ENCODE measurements at regions of chr11 and their contacts with region 1.

Region 1: GRCh38 chr11:64846998-64847666 is 2.7 kb upstream of the CDC42BPG start:
- DNase-seq: peak; percentile 94
- H3K4me3 Mint-ChIP-seq: no peak overlapping the region
- H3K27ac Mint-ChIP-seq: peak overlapping the region; percentile 64
- H3K4me1 Mint-ChIP-seq: peaks cover 58% of the 10 kb centered on the region
- H3K27me3 Mint-ChIP-seq: no peaks in the 10 kb centered on the region

Region 2: DNA sequence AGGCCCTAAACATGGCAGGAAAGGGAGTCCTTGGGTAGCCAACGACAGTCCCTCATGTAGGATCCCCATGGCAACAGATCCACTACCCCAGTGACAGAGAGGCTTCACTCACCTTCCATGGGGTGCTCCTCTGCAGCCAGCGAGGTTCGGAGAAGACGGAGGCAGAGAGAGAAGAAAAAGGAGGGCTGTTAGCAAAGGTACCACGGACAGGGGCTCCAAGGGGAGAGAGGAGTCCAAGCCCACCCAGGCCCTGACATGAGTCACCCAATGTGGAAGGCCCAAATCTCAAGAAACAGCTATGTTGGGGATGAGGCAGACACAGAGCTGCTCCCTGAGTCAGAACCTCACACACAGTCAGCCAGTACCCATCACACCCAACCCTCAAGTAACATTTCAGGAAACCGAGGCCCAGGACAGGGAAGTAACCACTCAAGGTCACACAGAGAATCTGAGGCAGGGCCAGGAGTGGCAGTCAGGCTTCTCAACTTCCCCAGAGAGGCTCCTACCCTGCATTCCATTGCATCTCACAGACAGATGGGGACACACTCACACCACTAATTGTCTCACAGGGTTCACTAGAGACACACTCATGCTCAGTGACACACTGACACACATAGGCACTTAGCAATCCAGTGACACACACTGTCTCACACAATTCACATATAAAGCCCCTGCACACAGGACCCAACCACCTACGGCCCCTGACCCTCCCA is 149.3 kb before region 1 on chr11:
- CTCF ChIA-PET with region 1: no interaction called
- POLR2A ChIA-PET with region 1: no interaction called
- DNase-seq: no peak
- H3K4me3 Mint-ChIP-seq: no peak overlapping the region
- H3K27ac Mint-ChIP-seq: no peak overlapping the region
- H3K4me1 Mint-ChIP-seq: peaks cover 6% of the 10 kb centered on the region
- H3K27me3 Mint-ChIP-seq: peaks cover 35% of the 10 kb centered on the region

Region 3: DNA sequence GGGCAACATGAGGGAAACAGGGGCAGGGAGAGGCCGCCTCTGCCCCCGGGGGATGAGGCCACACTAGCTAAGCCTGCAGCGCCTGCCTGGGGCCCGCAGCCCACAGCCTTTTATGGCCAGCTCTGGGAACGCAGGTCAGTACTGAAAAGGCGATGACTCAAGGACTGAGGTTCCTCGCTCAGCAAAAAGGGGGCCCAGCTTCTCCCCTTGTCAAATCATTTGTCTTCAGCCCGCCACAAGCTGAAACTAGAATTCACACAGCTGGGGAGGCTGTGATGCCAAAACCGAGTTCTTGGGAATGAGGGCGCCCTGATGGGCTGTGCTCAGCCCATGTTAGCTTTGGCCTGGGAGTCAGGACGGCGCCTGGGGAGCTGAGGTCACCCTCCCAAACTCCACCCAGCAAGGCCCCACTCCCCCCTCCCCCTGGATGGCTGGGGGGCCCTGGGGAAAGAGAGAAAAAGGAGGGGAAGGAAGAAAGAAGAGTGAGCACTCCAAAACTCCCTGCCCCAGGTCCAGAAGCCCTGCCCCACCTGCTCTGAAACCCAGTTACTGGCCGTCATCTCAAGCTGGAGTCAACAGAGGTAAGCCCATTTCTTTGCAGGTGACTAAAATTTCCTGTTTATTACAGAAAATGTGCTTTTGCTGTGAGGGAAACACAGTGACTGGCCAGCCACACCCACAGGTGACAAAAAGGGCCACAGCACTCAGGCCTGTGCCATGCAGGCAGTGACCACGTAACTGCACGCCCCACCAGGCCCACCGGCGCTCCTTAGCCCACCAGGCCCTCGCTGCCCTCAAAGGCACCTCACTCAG is 17.5 kb after region 1 on chr11:
- CTCF ChIA-PET with region 1: interaction called, 232 read pairs
- POLR2A ChIA-PET with region 1: no interaction called
- DNase-seq: no peak
- H3K4me3 Mint-ChIP-seq: peak overlapping the region; percentile 48
- H3K27ac Mint-ChIP-seq: peak overlapping the region; percentile 98
- H3K4me1 Mint-ChIP-seq: peaks cover 92% of the 10 kb centered on the region
- H3K27me3 Mint-ChIP-seq: no peaks in the 10 kb centered on the region

Region 4: GRCh38 chr11:64878494-64879243 is 31.5 kb after region 1 on chr11 and contains the start of gene EHD1:
- CTCF ChIA-PET with region 1: interaction called, 732 read pairs
- POLR2A ChIA-PET with region 1: no interaction called
- DNase-seq: peak; percentile 100
- H3K4me3 Mint-ChIP-seq: peak within 1 kb of the TSS; percentile 93
- H3K27ac Mint-ChIP-seq: peak within 1 kb of the TSS; percentile 97
- H3K4me1 Mint-ChIP-seq: peaks cover 60% of the 10 kb centered on the region
- H3K27me3 Mint-ChIP-seq: no peaks in the 10 kb centered on the region
- total RNA-seq, gene EHD1: 131 to 149 TPM

Region 5: GRCh38 chr11:64951529-64951928 is 104.4 kb after region 1 on chr11:
- CTCF ChIA-PET with region 1: no interaction called
- POLR2A ChIA-PET with region 1: no interaction called
- DNase-seq: no peak
- H3K4me3 Mint-ChIP-seq: no peak overlapping the region
- H3K27ac Mint-ChIP-seq: no peak overlapping the region
- H3K4me1 Mint-ChIP-seq: no peaks in the 10 kb centered on the region
- H3K27me3 Mint-ChIP-seq: peaks cover 9% of the 10 kb centered on the region

Region 6: DNA sequence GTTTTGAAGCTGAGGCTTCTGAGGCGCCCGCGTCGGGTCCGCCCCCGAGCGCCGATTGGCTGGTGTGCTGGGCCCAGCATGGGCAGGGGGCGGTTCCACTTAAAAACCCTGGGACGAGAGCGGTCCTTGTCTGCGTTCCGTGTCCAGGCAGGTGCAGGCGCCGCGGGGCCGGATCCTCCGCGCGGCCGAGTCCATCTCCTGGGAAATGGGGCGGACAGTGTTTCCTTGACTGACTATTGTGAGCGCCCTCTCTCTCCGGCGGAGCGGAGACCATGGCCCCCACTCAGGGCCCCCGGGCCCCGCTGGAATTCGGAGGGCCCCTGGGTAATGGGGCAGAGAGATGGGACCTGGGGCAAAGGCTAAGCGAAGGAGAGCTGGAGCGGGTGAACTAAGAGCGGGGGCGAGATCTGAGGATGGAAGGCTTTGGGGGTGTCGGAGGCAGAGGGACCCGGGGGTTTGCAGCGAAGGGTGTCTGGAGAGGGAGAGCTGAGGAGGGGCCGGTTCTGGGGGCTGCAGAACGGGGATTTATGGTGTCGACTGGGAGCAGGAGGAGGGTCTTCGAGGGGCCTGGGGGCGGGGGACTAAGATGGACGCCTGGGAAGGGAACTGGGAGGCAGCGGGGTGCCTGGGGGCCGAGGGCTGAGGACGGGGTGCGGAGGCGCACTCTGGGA is 264.7 kb after region 1 on chr11 and contains the start of gene TM7SF2:
- CTCF ChIA-PET with region 1: interaction called, 11 read pairs
- POLR2A ChIA-PET with region 1: no interaction called
- DNase-seq: peak; percentile 97
- H3K4me3 Mint-ChIP-seq: peak within 1 kb of the TSS; percentile 86
- H3K27ac Mint-ChIP-seq: peak within 1 kb of the TSS; percentile 92
- H3K4me1 Mint-ChIP-seq: peaks cover 51% of the 10 kb centered on the region
- H3K27me3 Mint-ChIP-seq: no peaks in the 10 kb centered on the region
- total RNA-seq, gene TM7SF2: 26.1 to 27.7 TPM

Measured in activated CD4-positive, alpha-beta T cell treated with anti-CD3 and anti-CD28 coated beads, Interleukin-2, amount 10 ng/mL, durations not matched to agents 7 days and 5 days (primary cell).